ENCODE measurements at regions of chr10 and their contacts with region 1.

Region 1: DNA sequence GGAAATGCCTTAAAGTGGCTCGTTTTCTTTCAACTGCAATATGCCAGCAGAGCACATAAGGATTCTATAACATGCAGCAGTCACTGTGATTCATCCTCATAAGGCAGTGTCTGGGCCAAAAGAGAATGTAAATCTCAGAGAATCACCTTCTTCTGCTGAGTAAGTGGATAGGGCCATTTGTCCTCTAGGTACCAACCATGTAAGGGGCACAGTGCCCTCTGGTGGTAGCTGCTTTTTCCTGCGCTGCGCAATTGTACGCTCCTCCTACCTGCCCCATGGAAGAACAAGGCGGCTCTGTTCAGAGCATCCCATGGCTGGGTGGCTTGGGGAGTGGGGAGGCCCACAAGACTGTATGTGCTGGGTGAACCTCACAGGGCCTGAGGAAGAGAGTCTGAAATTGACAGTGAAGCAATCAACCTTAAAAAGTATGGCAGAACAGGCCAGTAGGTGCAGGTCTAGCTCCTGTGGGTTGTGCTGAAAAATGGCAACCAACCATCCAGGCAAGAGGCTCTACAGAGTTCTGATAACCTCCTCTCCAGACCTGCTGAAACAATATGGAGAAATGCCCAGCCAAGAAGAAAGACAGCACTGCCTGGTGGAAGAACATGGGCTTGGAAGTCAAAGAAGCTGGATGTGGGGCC is 78.6 kb upstream of the C10orf90 start:
- DNase-seq: peak; percentile 51
- H3K4me3 ChIP-seq: no peak overlapping the region
- H3K27ac ChIP-seq: no peak overlapping the region
- H3K4me1 ChIP-seq: no peaks in the 10 kb centered on the region
- H3K27me3 ChIP-seq: no peaks in the 10 kb centered on the region
- CTCF ChIP-seq: peak; percentile 84 to 90

Region 2: DNA sequence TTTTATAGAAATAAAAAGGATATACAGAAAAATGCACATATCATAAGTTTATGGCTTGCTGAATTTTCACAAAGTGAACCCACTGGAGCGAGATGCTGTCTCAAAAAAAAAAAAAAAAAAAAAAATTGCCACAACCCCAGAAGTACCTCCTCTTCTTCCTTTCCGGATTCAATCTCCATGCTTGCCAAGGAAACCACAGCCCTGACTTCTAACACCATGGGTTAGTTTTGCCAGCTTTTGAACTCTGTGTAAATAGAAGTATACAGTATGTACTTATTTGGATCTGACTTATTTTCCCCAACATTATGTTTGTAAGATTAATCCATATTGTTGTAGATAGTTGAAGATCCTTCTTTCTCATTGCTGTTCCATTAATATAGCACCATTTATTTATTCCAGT is 812.8 kb before region 1 on chr10:
- CTCF ChIA-PET with region 1: no interaction called
- dilution Hi-C with region 1: no loop called
- in situ Hi-C with region 1: no loop called
- intact Hi-C with region 1: loop called (anchors 1 kb)
- DNase-seq: no peak
- H3K4me3 ChIP-seq: no peak overlapping the region
- H3K27ac ChIP-seq: no peak overlapping the region
- H3K4me1 ChIP-seq: peaks cover 7% of the 10 kb centered on the region
- H3K27me3 ChIP-seq: no peaks in the 10 kb centered on the region
- CTCF ChIP-seq: no peak

Region 3: DNA sequence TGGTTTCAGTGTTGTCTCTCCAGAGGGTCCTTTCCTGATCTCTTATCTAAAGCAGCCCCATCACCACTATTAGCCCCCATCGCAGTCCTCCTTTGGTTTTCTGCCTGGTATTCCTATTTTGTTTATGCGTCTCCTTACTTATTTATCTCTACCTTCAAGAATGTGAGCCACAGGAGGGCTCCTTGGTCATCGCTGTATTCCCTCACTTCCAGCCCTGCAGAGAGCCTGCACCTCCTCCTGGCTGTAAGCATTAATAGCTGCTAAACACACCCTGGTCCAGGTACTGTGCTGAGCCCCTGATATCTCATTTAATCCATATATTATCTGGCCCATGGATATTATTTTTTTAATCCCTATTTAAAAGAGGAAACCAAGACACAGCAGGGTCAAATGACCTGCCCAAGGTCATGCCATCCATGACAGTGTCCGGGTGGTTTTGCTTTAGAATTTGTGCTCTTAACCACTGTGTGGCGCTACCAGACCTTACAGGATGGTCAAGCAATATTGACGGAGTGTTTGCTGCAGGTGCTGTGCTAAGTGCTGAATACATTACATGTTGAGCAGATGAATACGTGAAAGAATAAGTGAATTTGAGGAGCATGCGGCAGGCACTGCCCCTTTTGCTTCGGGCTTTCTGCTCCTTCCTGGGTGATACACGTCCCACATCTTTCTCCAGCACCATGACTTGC is 588.0 kb before region 1 on chr10:
- CTCF ChIA-PET with region 1: no interaction called
- dilution Hi-C with region 1: no loop called
- in situ Hi-C with region 1: no loop called
- intact Hi-C with region 1: loop called (anchors 2 kb)
- DNase-seq: no peak
- H3K4me3 ChIP-seq: no peak overlapping the region
- H3K27ac ChIP-seq: no peak overlapping the region
- H3K4me1 ChIP-seq: no peaks in the 10 kb centered on the region
- H3K27me3 ChIP-seq: no peaks in the 10 kb centered on the region
- CTCF ChIP-seq: peak in 1 of 2 donors; percentile 36

Region 4: DNA sequence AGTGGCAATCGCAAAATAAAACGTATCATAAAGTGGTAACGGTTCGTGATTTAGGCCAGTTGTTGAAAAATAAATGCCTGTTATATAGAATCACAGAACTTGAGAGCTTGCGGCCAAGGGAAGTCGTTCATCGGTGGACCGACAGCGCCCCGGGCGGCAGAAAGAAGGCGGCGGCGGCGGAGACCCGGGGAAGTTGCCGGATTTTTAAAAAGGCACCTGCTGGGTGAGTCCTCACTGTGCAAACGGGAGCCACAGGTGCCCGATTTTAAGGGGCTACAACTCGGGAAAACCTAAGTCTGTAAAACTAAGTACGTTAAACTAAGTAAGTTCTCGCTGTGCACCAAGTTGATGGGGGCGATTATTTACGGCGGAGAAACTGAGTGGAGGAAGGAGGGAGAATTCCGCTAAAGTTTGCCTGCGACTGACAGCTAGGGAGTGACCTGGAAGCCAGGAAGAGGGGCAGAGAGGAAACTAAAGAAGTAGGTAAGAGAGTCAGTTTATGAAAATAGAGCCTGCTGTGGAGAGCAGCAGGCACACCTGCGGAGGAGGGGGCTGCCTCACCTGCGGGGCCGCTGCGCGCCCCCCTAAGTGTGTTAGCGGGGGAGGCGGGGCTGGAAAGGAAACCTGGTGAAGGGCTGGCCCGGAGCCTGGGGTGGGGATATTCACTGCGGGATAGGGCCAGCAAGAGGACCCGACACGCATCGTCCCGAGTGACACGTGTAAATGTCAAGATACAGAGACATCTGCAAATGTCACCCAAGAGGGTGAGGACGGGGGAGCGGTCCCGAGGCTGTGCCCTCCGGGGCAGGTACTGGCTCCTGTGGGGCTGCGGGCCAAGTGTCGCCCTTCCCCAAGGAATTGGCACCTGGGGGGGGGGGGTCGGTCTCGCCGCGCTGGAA is 361.9 kb before region 1 on chr10:
- CTCF ChIA-PET with region 1: no interaction called
- dilution Hi-C with region 1: no loop called
- in situ Hi-C with region 1: no loop called
- intact Hi-C with region 1: loop called (anchors 10 kb)
- DNase-seq: peak; percentile 46
- H3K4me3 ChIP-seq: peak overlapping the region; percentile 13 to 56 (median 52)
- H3K27ac ChIP-seq: no peak overlapping the region
- H3K4me1 ChIP-seq: peaks cover 18% of the 10 kb centered on the region
- H3K27me3 ChIP-seq: no peaks in the 10 kb centered on the region
- CTCF ChIP-seq: peak; percentile 63 to 75

Measured in mammary epithelial cell (primary cell).